Gastrocnemius medialis (tissue), 4 donors: ENCODE measurements at regions of chr1 and their contacts with region 1.

Region 1: GRCh38 chr1:205711104-205712020 is 31.1 kb upstream of the SLC45A3 start:
- DNase-seq: peak; percentile 32
- ATAC-seq: peak; percentile 75 to 79
- H3K4me3 ChIP-seq: no peak overlapping the region
- H3K27ac ChIP-seq: peak overlapping the region in 1 of 4 donors; percentile 49
- H3K4me1 ChIP-seq: peaks cover 18 to 22% of the 10 kb centered on the region in 2 donors
- H3K27me3 ChIP-seq: no peaks in the 10 kb centered on the region
- CTCF ChIP-seq: peak; percentile 68 to 86 (median 74)
- POLR2A ChIP-seq: no peak

Region 2: DNA sequence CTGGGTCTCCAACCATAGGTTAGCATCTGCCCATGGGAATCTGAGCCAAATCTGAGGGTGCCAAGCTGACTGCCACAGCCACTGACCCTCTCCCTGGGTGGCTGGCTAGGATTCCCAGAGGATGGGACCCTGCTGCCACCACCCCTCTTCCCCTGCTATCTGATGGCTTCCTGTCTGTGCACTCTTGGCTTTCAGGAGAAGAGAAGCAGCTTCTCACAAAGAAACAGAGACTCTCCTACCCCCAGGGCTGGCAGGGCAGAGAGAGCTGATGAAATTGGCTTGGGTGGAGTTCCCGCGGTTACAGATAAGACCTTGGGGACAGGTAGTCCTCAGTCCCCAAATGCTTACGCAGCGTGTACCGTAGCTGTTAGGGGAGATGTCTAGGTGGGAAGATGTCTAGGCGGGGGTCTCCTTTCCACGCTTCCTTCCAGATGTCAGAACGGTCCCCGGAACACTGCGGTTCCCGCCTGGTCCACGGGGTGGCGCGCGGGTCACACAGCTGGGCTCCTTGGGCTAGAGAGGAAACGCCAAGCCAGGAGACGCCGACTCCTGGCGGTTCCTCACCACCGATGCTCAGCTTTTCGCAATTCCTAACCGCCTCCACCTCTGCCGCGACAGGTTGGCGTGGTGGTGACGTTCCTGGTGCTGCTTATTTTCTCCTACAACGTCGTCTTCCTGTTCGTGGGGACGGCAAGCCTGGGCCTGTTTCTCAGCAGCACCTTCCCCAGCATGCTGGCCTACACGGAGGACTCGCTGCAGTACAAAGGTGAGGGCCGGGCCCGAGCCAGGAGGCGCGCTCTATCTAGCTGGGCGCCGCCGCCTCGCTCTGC is 119.6 kb before region 1 on chr1:
- in situ Hi-C with region 1: no loop called
- intact Hi-C with region 1: loop called (anchors 2 kb)
- DNase-seq: peak; percentile 58 to 74
- ATAC-seq: peak; percentile 80 to 94
- H3K4me3 ChIP-seq: peak overlapping the region; percentile 38 to 76 (median 46)
- H3K27ac ChIP-seq: no peak overlapping the region
- H3K4me1 ChIP-seq: no peaks in the 10 kb centered on the region
- H3K27me3 ChIP-seq: no peaks in the 10 kb centered on the region
- CTCF ChIP-seq: peak; percentile 98 to 99 (median 99)
- POLR2A ChIP-seq: no peak

Region 3: GRCh38 chr1:205664376-205665108 is 46.8 kb before region 1 on chr1:
- in situ Hi-C with region 1: loop called in 2 of 4 experiments (anchors 5 kb)
- intact Hi-C with region 1: loop called (anchors 1 kb)
- DNase-seq: no peak
- ATAC-seq: no peak
- H3K4me3 ChIP-seq: no peak overlapping the region
- H3K27ac ChIP-seq: no peak overlapping the region
- H3K4me1 ChIP-seq: peaks cover 2 to 4% of the 10 kb centered on the region in 2 donors
- H3K27me3 ChIP-seq: no peaks in the 10 kb centered on the region
- CTCF ChIP-seq: no peak
- POLR2A ChIP-seq: no peak

Region 4: DNA sequence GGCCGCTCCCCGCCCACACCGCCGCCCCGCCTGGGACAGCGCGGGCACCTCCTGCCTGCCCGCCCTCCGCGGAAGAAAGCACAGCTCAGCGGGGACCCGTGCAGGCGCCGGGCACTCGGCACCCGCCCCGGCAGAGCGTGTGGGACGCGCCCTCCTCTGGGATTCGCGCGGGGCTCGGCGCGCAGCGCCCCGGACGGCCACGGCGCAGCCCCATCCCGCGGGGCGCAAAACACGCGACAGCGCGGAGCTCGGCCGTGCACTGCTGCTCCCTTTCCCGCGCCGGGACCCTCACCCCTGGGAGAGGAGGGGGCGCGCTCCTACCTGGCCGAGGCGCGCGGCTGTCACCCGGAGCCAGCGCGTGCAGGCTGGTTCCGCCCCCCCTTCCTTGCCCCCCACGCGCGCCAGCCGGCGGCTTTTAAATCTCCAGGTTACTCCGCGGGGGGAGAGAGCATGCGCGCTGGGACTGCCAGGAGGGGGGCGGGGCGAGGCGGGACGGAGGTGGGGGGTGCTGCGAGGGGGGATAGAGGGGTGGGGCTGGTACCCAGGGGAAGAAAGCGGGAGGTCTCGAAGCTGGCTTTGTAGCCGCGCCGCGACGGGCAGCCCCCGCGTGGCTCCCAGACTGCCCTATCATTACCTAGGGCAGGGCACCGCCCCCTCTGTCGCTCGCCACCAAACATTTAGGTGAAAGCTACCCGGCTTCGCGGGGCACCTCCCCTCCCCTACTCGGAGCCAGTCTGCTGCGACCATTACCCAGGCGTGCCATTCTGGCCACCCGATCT is 31.1 kb before region 1 on chr1 and contains the start of gene SLC45A3:
- in situ Hi-C with region 1: no loop called
- intact Hi-C with region 1: no loop called
- DNase-seq: no peak
- ATAC-seq: peak; percentile 23 to 24
- H3K4me3 ChIP-seq: peak within 1 kb of the TSS; percentile 57 to 79 (median 64)
- H3K27ac ChIP-seq: peak within 1 kb of the TSS; percentile 37 to 62 (median 44)
- H3K4me1 ChIP-seq: peaks cover 5 to 24% of the 10 kb centered on the region in 2 donors
- H3K27me3 ChIP-seq: peaks cover 0 to 6% (median 0%) of the 10 kb centered on the region in 3 donors
- CTCF ChIP-seq: no peak
- POLR2A ChIP-seq: no peak
- total RNA-seq, gene SLC45A3: 0.76 to 1.2 (median 1.0) TPM in 3 of 4 donors, not detected in the other

Region 5: GRCh38 chr1:205832326-205832751 is 121.0 kb after region 1 on chr1:
- in situ Hi-C with region 1: no loop called
- intact Hi-C with region 1: no loop called
- DNase-seq: no peak
- ATAC-seq: peak in 1 of 2 donors; percentile 39
- H3K4me3 ChIP-seq: no peak overlapping the region
- H3K27ac ChIP-seq: no peak overlapping the region
- H3K4me1 ChIP-seq: peaks cover 0 to 19% of the 10 kb centered on the region in 2 donors
- H3K27me3 ChIP-seq: no peaks in the 10 kb centered on the region
- CTCF ChIP-seq: no peak
- POLR2A ChIP-seq: no peak